GM10248 (cell line): ENCODE measurements at regions of chr5 and their contacts with region 1.

Region 1: GRCh38 chr5:31062902-31063580 is 130.4 kb upstream of the CDH6 start:
- DNase-seq: no peak
- CTCF ChIP-seq: no peak

Region 2: DNA sequence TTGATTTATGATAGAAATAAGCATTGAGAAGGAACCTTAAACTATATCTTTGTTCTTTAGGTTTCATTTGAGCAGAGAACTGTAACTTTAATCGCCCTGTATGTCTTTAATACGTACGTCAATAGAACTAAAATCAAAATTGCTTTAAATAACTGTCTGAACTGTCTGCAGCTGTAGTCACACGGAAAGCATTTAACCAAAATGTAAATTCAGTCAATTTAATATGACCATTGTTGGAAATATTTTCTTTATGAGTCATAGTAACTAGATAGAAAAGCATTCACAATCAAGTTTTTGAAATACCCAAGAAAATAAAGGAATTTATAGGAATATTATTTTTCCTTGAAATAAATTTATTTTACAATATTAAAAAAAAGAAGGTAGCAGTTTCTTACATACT is 26.6 kb before region 1 on chr5:
- CTCF ChIA-PET with region 1: no interaction called
- POLR2A ChIA-PET with region 1: no interaction called
- DNase-seq: no peak
- CTCF ChIP-seq: no peak

Region 3: DNA sequence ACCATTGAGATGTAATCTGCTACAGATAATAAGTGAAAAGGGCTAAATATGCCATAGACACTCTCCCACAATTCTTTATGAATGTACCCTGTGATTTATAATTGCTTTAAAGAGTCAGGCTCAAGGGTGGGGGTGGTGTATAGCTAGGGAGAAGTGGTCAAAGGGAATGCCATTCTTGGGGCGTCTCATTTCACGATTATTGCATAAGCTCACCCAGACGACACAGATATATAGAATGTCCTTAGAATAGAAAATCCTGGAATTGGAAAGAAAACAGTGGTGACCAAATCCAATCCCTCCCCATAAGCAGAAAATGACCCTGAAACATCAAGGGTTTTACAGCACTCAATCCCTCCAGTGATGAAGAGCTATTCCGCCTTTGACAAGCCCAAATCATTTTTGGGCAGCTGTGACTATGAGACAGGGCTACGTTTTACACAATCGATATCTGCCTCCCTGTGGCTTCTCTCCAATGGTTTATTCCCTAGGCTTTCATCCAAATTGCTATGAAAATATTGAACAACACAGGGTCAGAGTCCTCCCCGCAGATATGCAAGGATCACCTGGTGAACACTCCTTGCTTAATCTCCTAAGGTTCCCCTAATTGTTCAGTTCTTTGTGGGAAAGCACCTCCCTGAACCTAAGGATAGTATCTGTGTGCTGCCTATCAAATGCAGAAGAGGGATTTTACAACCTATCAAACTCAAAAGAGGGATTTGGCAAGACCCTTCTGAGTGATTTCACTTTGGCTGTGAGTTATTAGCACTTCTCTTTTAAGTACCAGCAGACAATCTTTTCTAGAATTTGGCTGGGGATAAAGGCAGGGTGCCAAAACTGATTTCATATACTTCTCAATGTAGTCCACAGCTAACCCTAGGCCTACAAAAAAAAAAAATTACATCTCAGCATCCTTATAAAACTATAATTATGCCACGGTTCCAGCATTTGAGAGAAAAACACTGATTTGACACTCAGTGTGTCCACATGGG is 14.5 kb before region 1 on chr5:
- CTCF ChIA-PET with region 1: interaction called, 10 read pairs
- POLR2A ChIA-PET with region 1: no interaction called
- DNase-seq: no peak
- CTCF ChIP-seq: no peak

Region 4: DNA sequence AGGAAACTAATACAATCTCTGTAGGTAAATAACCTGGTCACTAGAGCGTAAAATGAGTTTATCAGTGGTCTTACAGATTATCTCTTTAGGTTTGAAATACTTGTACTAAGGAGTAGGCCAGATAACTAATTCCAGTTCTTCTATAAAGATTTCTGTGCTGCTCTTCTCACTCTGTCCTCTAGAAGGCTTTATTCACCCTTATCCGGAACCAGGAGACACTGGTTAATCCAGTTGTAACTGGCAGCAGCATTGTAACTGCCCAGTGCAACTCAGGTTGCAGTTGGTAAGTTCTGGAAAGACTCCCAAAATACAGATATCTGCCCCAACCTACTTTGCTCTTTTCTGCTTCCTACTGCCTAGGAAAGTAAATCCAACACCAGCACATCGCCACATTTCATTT is 488.8 kb after region 1 on chr5:
- CTCF ChIA-PET with region 1: no interaction called
- POLR2A ChIA-PET with region 1: no interaction called
- DNase-seq: no peak
- CTCF ChIP-seq: no peak